ENCODE measurements at regions of chr16 and their contacts with region 1.

Region 1: GRCh38 chr16:86059253-86060171 is 160.6 kb downstream of the IRF8 start:
- DNase-seq: no peak
- H3K4me3 ChIP-seq: no peak overlapping the region
- CTCF ChIP-seq: no peak
- POLR2A ChIP-seq: no peak

Region 2: DNA sequence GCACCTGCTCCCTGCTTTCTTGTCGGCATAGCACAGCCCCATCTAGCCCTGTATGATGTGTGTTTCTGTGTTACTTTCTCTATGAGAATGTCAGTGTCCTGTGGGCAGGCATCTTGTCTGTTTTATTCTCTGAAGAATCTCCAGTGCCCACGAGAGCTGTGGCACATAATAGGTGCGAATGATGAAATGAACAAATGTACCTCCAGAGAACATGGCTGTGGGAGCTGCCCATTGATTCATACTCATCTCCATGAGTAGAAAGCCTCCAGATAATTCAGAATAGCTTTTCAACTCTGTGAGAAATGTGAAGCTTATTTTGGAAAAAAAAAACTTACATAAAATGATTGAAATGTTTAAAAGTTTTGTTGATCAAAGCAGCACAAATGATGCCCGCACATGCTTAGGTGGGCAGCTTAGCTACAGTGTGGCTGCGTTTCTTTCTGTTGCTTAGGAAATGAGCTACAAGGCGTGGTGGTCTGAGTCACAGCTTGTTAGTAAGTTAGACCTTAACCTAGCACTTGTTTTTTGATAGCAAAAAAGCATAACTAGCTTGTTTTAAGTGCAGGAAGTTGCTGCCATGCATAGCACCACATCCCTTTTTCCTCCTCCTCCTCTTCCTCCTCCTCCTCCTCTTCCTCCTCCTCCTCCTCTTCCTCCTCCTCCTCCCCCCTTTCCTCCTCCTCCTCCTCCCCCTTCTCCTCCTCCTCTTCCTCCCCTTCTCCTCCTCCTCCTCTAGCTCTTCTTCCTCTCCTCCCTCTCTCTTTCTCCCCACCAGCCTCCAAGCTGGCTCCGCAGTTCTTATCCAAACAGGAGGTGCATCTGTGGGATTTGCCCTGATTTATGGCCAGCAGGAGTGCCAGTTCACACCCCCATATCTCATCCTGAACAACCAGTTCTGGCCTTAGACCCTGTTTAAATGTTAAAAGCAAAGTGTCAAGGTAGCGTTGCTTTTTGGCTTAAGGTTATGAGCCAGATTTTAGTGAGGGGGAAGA is 61.0 kb after region 1 on chr16:
- intact Hi-C with region 1: no loop called
- DNase-seq: peak in 1 of 2 donors; percentile 18
- H3K4me3 ChIP-seq: no peak overlapping the region
- CTCF ChIP-seq: no peak
- POLR2A ChIP-seq: no peak

Region 3: DNA sequence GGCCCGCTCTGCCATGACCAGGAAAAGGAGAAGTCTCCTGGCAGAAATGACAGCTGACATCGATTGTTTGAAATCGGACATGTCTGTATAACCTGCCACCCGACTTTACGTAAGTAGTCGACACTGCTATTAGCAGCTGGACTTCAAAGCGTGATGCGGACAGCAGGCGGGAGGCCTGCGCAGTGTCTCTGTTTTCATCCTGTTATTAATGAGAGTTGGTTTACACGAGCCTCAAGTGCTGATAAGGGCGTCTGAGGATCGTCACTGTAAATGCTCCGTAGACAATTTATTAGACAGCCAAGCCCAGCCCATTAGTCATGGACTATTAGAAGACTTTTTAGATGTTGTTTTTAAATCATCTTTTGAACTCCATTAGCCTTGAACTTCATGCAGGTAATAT is 847.1 kb after region 1 on chr16:
- intact Hi-C with region 1: loop called (anchors 5 kb)
- DNase-seq: no peak
- H3K4me3 ChIP-seq: no peak overlapping the region
- CTCF ChIP-seq: no peak
- POLR2A ChIP-seq: no peak

Measured in lower leg skin (tissue), 4 donors.